Dorsolateral prefrontal cortex (tissue), 120 donors: ENCODE measurements at regions of chr4 and their contacts with region 1.

Region 1: GRCh38 chr4:163660636-163661035 is 166.1 kb downstream of the TMA16 start:
- DNase-seq: no peak
- H3K4me3 ChIP-seq: no peak overlapping the region
- H3K27ac ChIP-seq: no peak overlapping the region
- H3K27me3 ChIP-seq: no peaks in the 10 kb centered on the region
- CTCF ChIP-seq: no peak

Region 2: GRCh38 chr4:163344147-163345125 is 316.2 kb before region 1 on chr4:
- intact Hi-C with region 1: no loop called
- DNase-seq: peak in 4 of 10 donors; percentile 33 to 47 (median 46)
- H3K4me3 ChIP-seq: peak overlapping the region; percentile 38 to 79 (median 63)
- H3K27ac ChIP-seq: peak overlapping the region in 58 of 59 donors; percentile 5 to 93 (median 83)
- H3K27me3 ChIP-seq: peaks cover 0 to 49% (median 13%) of the 10 kb centered on the region in 45 donors
- CTCF ChIP-seq: no peak

Region 3: GRCh38 chr4:163595580-163595979 is 65.1 kb before region 1 on chr4:
- intact Hi-C with region 1: loop called in 1 of 2 experiments (anchors 2 kb)
- DNase-seq: no peak
- H3K4me3 ChIP-seq: no peak overlapping the region
- H3K27ac ChIP-seq: no peak overlapping the region
- H3K27me3 ChIP-seq: no peaks in the 10 kb centered on the region
- CTCF ChIP-seq: no peak

Region 4: GRCh38 chr4:163810757-163811156 is 150.1 kb after region 1 on chr4:
- intact Hi-C with region 1: no loop called
- DNase-seq: no peak
- H3K4me3 ChIP-seq: no peak overlapping the region
- H3K27ac ChIP-seq: no peak overlapping the region
- H3K27me3 ChIP-seq: no peaks in the 10 kb centered on the region
- CTCF ChIP-seq: no peak